Motor neuron (in vitro differentiated cells): ENCODE measurements at regions of chr20 and their contacts with region 1.

Region 1: DNA sequence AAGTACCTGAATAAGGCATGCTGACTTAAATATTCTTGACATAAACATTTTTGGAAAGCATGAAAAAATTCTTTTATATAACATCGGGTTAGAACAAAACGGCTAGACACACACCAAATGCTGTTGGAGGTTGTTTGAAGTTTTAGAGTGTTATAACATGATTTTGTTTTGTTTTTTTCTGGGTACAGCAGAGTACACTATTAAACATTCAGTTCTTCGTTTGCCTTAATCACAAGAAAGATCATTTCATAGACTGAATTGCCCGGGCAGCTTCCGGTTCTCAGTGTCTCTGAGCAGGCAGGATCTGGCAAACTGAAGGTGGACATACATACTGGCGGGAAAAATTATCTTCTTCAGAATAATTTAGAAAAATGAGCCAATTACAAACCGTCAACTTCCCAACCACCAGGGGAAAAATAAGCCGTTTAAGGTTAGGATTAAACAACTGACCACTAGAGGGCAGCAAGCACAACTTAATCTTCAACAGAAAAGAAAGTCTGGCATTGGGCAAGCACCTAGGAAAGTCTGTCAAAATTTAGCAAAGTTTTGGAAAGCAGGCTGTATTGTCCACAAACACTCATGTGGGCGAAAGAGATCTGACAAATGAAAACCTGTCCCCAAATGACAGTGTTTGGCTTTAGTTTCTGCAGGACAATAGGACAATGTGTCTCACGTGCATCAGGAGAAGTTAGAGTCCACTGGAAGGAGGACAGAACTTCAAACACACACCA is 15.0 kb downstream of the ZNF217 start:
- ATAC-seq: peak; percentile 45 to 85 (median 62)
- H3K4me3 ChIP-seq: no peak overlapping the region
- H3K27ac ChIP-seq: no peak overlapping the region
- H3K4me1 ChIP-seq: peaks cover 16 to 26% of the 10 kb centered on the region in 2 donors

Region 2: GRCh38 chr20:53291548-53291947 is 287.1 kb before region 1 on chr20:
- in situ Hi-C with region 1: no loop called
- ATAC-seq: no peak
- H3K4me3 ChIP-seq: no peak overlapping the region
- H3K27ac ChIP-seq: no peak overlapping the region
- H3K4me1 ChIP-seq: peaks cover 0 to 3% of the 10 kb centered on the region in 2 donors

Region 3: GRCh38 chr20:53915446-53916172 is 337.0 kb after region 1 on chr20:
- in situ Hi-C with region 1: loop called in 2 of 9 experiments (anchors 10 to 25 kb)
- ATAC-seq: peak; percentile 64 to 96 (median 90)
- H3K4me3 ChIP-seq: peak overlapping the region; percentile 34 to 55 (median 36)
- H3K27ac ChIP-seq: peak overlapping the region; percentile 62 to 80
- H3K4me1 ChIP-seq: peaks cover 27 to 31% of the 10 kb centered on the region in 2 donors

Region 4: DNA sequence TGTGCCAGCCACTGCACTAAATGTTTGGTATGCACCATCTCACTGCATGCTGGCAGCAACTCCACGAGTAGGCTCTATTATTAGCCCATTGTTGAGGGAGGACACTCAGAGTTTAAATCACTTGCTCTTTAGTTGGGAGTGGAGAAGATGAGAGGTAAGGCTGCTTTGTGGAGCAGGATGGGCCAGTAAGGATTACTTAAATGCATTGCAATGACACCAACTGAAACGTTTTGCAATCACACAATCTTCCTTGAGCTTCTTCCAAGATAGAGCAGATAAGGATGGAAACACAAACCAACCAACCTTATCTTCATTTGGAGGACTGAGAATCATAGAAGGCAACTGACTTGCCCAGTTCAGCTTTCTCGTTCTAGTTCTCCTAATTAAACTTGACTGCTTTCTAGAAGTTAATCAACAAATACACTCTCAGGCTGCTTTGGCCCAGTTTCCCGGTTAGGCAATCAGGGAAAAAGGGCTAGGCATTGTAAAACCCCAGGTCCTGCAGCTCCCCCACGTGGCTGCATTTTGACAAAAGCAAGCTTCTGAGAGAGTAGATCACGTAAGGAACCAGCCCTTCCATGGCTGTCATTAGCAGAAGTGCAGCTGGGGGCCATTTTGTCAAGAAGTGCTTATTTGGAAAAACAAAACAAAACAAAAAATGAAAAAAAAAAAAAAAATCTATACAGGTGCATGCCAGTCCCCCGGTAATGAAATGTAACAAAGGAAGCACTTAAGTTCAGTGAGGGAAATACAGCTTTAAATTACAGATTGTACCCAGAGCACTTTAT is 361.1 kb after region 1 on chr20:
- in situ Hi-C with region 1: loop called in 7 of 9 experiments (anchors 10 to 25 kb)
- ATAC-seq: peak; percentile 73 to 87 (median 86)
- H3K4me3 ChIP-seq: peak overlapping the region in 4 of 5 donors; percentile 17 to 30 (median 22)
- H3K27ac ChIP-seq: peak overlapping the region; percentile 5 to 55
- H3K4me1 ChIP-seq: peaks cover 33% of the 10 kb centered on the region in 2 donors